ENCODE measurements at regions of chr19 and their contacts with region 1.

Region 1: GRCh38 chr19:18203863-18204393 is at the start of gene RAB3A:
- DNase-seq: peak; percentile 95
- ATAC-seq: peak; percentile 86
- H3K4me3 Mint-ChIP-seq: peak within 1 kb of the TSS; percentile 92
- H3K27ac Mint-ChIP-seq: peak within 1 kb of the TSS; percentile 87
- H3K4me1 Mint-ChIP-seq: peaks cover 29% of the 10 kb centered on the region
- H3K27me3 Mint-ChIP-seq: peaks cover 5% of the 10 kb centered on the region
- CTCF ChIP-seq: no peak
- total RNA-seq, gene RAB3A: 3.8 and 4.1 TPM in 2 replicates

Region 2: DNA sequence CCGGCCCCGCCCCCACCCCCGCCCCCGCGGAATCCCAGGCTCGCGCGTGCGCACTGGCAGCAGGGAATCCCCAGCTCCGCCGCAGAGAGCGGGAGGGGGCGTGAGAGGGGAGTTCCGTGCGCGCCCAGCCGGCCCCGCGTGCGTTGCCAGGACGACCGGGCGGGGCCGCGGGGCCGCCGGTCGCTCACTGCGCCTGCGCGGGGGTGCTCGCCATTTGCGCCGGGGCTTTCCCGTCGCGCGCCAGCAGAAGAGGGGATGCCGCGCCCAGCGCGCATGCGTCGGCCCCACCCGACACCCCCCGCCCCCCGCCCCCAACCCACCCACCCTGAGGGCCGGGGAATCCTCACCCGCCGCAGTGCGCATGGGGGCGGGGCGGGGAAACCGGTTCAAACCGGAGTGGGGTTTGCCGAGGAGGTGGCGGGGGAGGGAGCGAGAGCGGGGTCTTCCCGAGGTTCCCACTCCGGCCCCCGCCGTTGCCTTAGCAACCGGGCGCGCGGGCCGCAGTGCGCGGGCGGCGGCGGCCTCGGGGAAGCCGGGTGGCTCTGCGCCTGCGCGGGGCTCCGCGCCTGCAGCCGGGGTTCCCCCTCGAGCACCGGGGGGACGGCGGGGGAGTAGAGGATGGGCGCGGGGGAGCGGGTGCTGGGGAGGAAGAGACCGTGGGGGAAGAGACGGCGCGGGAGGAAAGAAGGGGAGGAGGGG is 256.0 kb before region 1 on chr19:
- CTCF ChIA-PET with region 1: no interaction called
- POLR2A ChIA-PET with region 1: interaction called, 3 read pairs
- intact Hi-C with region 1: loop called (anchors 2 kb)
- DNase-seq: peak; percentile 98
- ATAC-seq: peak; percentile 63
- H3K4me3 Mint-ChIP-seq: peak overlapping the region; percentile 74
- H3K27ac Mint-ChIP-seq: no peak overlapping the region
- H3K4me1 Mint-ChIP-seq: peaks cover 59% of the 10 kb centered on the region
- H3K27me3 Mint-ChIP-seq: peaks cover 12% of the 10 kb centered on the region
- CTCF ChIP-seq: no peak

Region 3: DNA sequence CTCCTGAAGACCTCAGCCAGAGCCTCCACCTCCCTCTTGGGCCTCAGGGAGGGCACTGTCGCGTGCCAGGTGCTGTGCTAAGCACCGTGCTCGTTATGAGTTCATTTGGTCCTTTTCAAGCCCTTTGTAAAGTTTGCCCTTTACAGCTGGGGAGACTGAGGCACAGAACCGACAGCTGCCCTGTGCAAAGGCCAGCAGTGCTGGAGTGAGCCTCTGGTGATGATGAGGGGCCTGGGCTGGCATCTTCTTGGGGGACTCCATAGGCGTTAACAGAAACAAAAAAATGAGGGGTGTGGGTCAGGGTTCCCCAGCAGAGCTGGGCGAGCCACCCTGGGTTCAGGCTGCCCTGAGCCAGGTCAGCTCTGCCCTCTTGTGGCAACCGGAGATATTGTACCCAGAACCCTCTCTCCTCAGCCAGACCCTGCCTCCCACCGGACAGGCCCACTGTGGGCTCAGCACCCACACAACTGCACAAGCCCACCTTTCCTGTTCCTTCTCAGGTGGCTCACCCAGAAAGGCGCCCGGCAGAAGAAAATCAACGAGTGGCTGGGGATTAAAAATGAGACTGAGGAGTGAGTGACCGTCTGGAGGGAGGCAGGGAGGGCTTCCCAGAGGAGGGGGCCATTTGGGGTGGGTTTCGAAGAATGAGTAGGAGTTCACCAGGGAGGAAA is 35.8 kb before region 1 on chr19:
- CTCF ChIA-PET with region 1: interaction called, 7 read pairs
- POLR2A ChIA-PET with region 1: interaction called, 18 read pairs
- intact Hi-C with region 1: loop called (anchors 1 kb)
- DNase-seq: peak; percentile 52
- ATAC-seq: peak; percentile 34
- H3K4me3 Mint-ChIP-seq: peak overlapping the region; percentile 66
- H3K27ac Mint-ChIP-seq: peak overlapping the region; percentile 82
- H3K4me1 Mint-ChIP-seq: peaks cover 53% of the 10 kb centered on the region
- H3K27me3 Mint-ChIP-seq: no peaks in the 10 kb centered on the region
- CTCF ChIP-seq: peak; percentile 44

Region 4: GRCh38 chr19:18224525-18225354 is 20.8 kb after region 1 on chr19:
- CTCF ChIA-PET with region 1: no interaction called
- POLR2A ChIA-PET with region 1: interaction called, 4 read pairs
- intact Hi-C with region 1: loop called (anchors 2 kb)
- DNase-seq: peak; percentile 77
- ATAC-seq: peak; percentile 98
- H3K4me3 Mint-ChIP-seq: peak overlapping the region; percentile 84
- H3K27ac Mint-ChIP-seq: peak overlapping the region; percentile 35
- H3K4me1 Mint-ChIP-seq: peaks cover 45% of the 10 kb centered on the region
- H3K27me3 Mint-ChIP-seq: peaks cover 55% of the 10 kb centered on the region
- CTCF ChIP-seq: no peak

Region 5: DNA sequence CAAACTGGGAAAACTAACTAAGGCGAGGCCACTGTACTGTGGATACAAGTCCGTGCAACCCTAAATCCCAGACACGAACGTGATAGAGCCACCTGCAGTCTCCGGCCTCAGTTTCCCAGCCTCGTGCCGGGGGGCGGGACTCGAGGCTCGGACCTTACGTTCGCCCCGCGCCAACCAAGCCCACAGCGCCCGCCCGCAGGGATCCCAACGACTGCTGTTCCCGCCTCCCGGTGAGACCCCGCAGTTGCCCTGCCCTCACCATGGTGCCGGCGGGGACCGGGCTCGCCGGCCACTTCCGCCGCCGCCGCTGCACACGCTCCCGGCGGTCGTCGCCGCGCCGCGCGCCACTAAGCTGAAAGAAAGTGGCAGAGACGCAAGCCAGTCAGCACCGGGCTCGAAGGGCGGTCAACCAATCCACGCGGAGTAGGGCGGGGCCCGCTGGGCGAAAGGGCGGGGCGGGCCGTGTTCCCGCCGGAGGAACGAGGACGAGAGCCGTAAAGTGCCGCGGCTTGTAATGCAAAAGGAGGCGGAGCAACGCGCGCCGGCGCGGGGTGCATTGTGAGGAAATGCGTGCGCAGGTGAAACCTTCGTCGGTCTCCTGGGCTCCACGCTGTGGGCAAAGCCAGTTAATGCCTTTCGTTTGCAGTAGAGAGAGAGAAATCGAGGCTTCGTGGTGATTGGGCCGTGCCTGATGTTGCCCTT is 119.0 kb after region 1 on chr19 and contains the start of gene LSM4:
- CTCF ChIA-PET with region 1: interaction called, 13 read pairs
- POLR2A ChIA-PET with region 1: interaction called, 11 read pairs
- intact Hi-C with region 1: loop called (anchors 1 kb)
- DNase-seq: peak; percentile 98
- ATAC-seq: peak; percentile 94
- H3K4me3 Mint-ChIP-seq: peak within 1 kb of the TSS; percentile 85
- H3K27ac Mint-ChIP-seq: peak within 1 kb of the TSS; percentile 91
- H3K4me1 Mint-ChIP-seq: peaks cover 46% of the 10 kb centered on the region
- H3K27me3 Mint-ChIP-seq: no peaks in the 10 kb centered on the region
- CTCF ChIP-seq: no peak
- total RNA-seq, gene LSM4: 59.2 and 70.3 TPM in 2 replicates

Region 6: DNA sequence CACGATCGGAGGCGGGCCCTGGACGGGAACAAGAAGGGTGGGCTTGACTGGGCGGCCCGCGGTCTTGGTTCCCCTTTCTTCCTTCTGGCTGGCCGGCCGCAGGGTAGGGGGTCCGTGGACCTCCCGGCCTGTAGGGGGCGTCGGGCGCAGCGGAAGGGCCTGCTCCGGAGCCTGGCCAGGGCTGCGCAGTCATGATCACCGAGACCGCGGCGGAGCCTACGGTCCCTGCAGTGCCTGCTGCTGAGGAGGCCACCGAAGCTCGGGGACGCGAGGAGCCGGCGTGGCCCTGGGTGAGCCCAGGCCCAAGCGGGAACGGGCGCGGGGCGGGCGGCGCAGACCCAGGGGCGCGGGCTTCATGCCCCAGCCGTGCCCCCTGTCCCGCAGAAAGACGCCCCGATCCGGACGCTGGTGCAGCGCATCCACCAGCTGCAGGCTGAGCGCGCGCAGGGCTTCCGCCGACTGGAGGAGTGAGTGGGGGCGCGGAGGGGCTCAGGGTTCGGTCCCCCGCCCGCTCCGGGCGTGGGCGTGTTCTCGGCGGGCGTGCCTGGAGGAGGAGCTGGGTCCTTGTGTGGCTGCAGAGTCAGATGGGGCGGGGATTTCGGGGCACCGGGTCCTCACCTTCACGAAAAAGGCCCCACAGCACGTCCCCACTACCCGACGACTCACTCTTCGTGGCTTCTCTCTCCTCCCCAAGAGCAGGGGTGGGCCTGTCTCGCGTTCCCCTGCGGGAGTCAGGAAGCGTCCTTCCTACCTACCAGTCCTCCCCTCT is 384.9 kb after region 1 on chr19 and contains the start of gene REX1BD:
- CTCF ChIA-PET with region 1: no interaction called
- POLR2A ChIA-PET with region 1: no interaction called
- intact Hi-C with region 1: loop called (anchors 1 kb)
- DNase-seq: peak; percentile 79
- ATAC-seq: peak; percentile 79
- H3K4me3 Mint-ChIP-seq: peak within 1 kb of the TSS; percentile 87
- H3K27ac Mint-ChIP-seq: peak within 1 kb of the TSS; percentile 83
- H3K4me1 Mint-ChIP-seq: peaks cover 41% of the 10 kb centered on the region
- H3K27me3 Mint-ChIP-seq: peaks cover 2% of the 10 kb centered on the region
- CTCF ChIP-seq: peak; percentile 61
- total RNA-seq, gene REX1BD: 83.7 and 85.9 TPM in 2 replicates

Measured in activated B cell treated with CpG ODN at 0.5 μM for 24 hours (primary cell).